ENCODE measurements at regions of chr16 and their contacts with region 1.

Region 1: DNA sequence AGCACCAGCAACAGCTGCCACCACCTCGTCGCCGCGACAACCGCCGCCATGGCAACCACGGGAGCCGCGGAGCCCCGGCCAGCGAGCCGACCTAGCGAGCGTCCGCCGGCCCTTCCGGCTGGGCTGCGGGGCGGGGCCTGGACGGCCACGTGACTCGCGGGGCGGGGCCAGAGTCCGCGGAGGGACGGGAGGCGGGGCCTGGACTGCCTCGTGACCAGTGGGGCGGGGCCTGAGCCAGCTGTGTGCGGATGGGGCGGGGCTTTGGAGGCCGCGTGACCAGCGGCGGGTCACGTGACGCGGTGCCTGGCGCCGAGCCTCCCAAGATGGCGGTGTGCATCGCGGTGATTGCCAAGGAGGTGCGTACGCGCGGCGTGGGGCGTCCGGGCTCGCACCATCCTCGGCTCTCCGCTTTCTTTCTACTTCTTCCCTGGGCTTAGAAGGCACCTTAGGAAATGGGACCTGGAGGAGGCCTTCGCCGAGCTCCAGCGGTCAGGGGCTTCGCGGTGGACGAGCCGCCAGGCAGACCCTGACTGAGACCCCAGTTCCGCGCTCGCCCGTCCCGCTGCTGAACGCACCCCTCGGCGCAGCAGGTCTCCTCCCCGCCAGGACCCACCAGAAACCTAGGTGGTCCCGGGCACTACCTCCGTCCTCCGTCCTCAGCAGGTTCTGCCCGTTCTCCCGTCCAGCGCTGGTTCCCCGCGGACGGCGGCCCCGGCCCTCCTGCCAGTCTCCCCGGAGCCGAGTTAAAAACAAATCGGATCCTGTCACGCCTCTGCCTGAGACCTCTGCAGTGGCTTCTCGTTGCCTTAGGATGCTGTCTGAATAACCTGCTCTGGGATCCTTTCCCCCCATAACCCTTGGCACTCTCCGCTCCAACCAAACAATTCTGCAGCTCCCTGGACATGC is at the starts of genes GALNS and TRAPPC2L:
- DNase-seq: peak; percentile 96 to 98 (median 97)
- H3K4me3 ChIP-seq: peak within 1 kb of the TSS; percentile 67 to 93
- H3K4me3 Mint-ChIP-seq: peak within 1 kb of the TSS; percentile 94 to 100 (median 97)
- H3K27ac ChIP-seq: peak within 1 kb of the TSS; percentile 76
- H3K27ac Mint-ChIP-seq: peak within 1 kb of the TSS; percentile 95 to 99 (median 97)
- H3K4me1 ChIP-seq: peaks cover 27% of the 10 kb centered on the region
- H3K4me1 Mint-ChIP-seq: peaks cover 18 to 43% (median 28%) of the 10 kb centered on the region in 4 donors
- H3K27me3 ChIP-seq: no peaks in the 10 kb centered on the region
- H3K27me3 Mint-ChIP-seq: peaks cover 0 to 2% of the 10 kb centered on the region in 2 donors
- total RNA-seq, gene GALNS: 58.8 to 65.7 TPM
- total RNA-seq, gene TRAPPC2L: 66.6 to 67.1 TPM

Region 2: DNA sequence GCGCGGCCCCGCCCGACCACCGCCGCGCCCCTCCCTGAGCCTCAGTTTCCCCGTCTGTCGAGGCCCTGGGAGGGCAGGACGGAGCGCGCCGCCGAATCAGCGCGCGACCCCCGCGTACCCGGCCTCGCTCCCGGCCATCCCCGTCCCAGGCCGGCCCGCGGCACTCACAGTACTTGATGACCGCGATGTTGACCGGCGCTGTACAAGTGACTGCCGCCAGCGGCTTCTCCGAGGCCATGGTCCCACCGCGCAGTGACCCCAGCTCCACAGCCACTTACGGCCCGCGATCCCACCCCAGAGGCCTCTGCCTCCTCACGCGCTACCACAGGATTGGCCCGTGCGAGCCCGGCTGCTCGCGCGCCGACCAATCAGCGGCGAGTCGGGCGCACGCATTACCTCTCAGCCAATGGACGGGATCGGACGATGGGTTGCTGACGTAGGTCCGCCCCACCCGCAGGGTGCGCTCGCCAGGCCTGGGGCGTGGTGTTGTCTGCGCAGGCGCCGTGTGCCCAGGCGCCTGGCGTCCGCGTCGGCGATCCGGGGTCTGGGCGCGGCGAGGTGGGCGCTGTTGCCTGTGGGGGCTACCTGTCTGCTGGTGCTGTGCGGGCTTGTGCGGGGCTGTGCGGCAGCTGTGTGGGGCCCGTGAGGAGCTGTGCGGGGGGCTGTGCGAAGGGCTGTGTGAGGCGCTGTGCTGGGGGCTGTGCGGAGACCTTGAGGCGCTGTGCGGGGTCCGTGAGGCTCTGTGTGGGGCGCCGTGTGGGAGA is 194.1 kb before region 1 on chr16 and contains the start of gene MVD:
- CTCF ChIA-PET with region 1: no interaction called
- POLR2A ChIA-PET with region 1: no interaction called
- intact Hi-C with region 1: loop called (anchors 1 kb)
- DNase-seq: peak; percentile 93 to 96 (median 95)
- H3K4me3 ChIP-seq: peak within 1 kb of the TSS; percentile 65 to 95
- H3K4me3 Mint-ChIP-seq: peak within 1 kb of the TSS; percentile 91 to 95 (median 94)
- H3K27ac ChIP-seq: peak within 1 kb of the TSS; percentile 83
- H3K27ac Mint-ChIP-seq: peak within 1 kb of the TSS; percentile 80 to 98 (median 97)
- H3K4me1 ChIP-seq: peaks cover 16% of the 10 kb centered on the region
- H3K4me1 Mint-ChIP-seq: peaks cover 11 to 22% (median 15%) of the 10 kb centered on the region in 4 donors
- H3K27me3 ChIP-seq: no peaks in the 10 kb centered on the region
- H3K27me3 Mint-ChIP-seq: no peaks in the 10 kb centered on the region
- total RNA-seq, gene MVD: 49.2 to 57.0 TPM

Region 3: DNA sequence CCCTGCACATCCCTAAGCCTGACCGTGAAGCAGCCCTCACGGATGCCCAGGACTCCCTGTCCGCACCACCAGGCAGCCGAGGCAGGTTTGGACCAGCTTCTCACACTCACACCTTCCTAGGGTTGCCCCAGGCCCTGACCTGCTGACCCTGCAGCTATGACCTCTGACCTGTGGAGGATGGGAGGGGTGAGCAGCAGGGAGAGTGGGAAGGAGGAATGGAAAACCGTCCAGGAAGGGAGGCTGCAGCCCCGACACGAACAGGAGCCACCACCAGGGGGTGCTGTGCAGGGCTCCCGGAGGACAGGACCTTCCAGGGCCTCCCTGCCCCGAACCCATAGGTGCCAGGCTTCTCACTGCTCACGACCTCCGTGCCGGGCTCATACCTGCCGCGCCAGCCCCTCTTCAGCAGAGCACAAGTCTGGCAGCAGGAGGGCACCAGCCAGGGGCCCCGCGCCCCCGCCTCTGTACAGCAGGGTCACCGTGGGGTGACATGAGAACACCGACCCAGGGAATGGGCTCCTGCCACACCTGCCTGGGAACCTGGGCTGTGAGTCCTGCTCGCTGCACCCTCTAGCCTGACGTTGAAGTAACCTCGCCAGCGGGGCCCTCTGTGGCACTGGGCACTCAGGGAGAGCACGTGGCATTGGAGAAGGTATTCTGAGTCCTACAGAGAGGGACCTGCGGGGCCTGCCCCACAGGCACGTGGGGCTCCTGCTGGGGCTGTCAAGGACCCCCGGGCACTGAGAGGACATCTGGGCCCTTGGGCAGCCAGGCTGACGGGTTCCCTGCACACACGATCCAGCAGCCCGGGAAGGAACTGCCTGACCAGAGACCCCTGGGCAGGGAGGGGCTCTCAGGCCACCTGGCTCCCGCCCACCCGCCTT is 113.1 kb before region 1 on chr16:
- CTCF ChIA-PET with region 1: interaction called, 13 read pairs
- POLR2A ChIA-PET with region 1: interaction called, 5 read pairs
- intact Hi-C with region 1: loop called (anchors 1 kb)
- DNase-seq: peak; percentile 65 to 76 (median 69)
- H3K4me3 ChIP-seq: no peak overlapping the region
- H3K4me3 Mint-ChIP-seq: peak overlapping the region in 4 of 8 donors; percentile 16 to 49 (median 30)
- H3K27ac ChIP-seq: no peak overlapping the region
- H3K27ac Mint-ChIP-seq: peak overlapping the region in 4 of 7 donors; percentile 7 to 52 (median 36)
- H3K4me1 ChIP-seq: peaks cover 41% of the 10 kb centered on the region
- H3K4me1 Mint-ChIP-seq: peaks cover 9 to 41% (median 22%) of the 10 kb centered on the region in 4 donors
- H3K27me3 ChIP-seq: no peaks in the 10 kb centered on the region
- H3K27me3 Mint-ChIP-seq: no peaks in the 10 kb centered on the region

Region 4: DNA sequence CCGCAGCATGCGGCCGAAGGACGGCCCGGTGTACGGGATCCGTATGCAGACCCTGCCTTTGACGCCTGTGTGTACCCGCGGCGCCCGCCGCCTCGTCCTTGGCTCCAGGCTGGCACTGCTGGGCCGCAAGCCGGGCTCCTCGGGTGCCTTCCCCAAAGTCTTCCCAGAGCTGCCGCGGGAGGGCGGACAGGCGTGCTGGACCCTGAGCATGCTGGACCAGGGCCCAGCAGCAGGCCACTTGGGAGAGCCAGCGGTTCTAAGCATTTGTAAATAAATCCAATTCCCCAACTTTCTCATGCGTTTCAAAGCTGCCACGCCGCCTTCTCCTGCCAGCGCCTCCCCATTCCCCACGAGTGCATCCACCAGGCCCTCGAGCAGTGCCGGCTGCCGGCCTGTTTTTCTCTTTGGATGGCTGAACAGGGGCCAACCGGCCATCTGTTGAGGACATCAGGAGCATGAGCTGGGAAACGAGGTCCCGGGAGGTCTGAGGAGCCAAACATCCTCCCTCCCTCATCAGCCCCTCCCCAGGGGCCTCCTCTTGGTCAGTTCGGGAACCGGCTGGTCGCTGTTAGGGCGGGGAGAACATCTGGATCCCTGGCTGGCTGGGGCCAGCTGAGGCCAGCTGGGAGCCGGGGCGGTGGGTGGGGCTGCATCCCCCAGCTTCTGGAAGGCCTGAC is 29.9 kb after region 1 on chr16:
- CTCF ChIA-PET with region 1: no interaction called
- POLR2A ChIA-PET with region 1: no interaction called
- intact Hi-C with region 1: no loop called
- DNase-seq: no peak
- H3K4me3 ChIP-seq: no peak overlapping the region
- H3K4me3 Mint-ChIP-seq: no peak overlapping the region
- H3K27ac ChIP-seq: no peak overlapping the region
- H3K27ac Mint-ChIP-seq: no peak overlapping the region
- H3K4me1 ChIP-seq: no peaks in the 10 kb centered on the region
- H3K4me1 Mint-ChIP-seq: peaks cover 2 to 6% (median 4%) of the 10 kb centered on the region in 4 donors
- H3K27me3 ChIP-seq: no peaks in the 10 kb centered on the region
- H3K27me3 Mint-ChIP-seq: no peaks in the 10 kb centered on the region

Region 5: GRCh38 chr16:89115216-89115861 is 258.3 kb after region 1 on chr16:
- CTCF ChIA-PET with region 1: no interaction called
- POLR2A ChIA-PET with region 1: interaction called, 12 read pairs
- intact Hi-C with region 1: no loop called
- DNase-seq: peak; percentile 94 to 98 (median 95)
- H3K4me3 ChIP-seq: peak overlapping the region; percentile 24 to 45
- H3K4me3 Mint-ChIP-seq: peak overlapping the region; percentile 79 to 92 (median 86)
- H3K27ac ChIP-seq: peak overlapping the region; percentile 86
- H3K27ac Mint-ChIP-seq: peak overlapping the region; percentile 85 to 99 (median 97)
- H3K4me1 ChIP-seq: peaks cover 46% of the 10 kb centered on the region
- H3K4me1 Mint-ChIP-seq: peaks cover 21 to 50% (median 37%) of the 10 kb centered on the region in 4 donors
- H3K27me3 ChIP-seq: no peaks in the 10 kb centered on the region
- H3K27me3 Mint-ChIP-seq: no peaks in the 10 kb centered on the region

Region 6: GRCh38 chr16:89217388-89218191 is 360.5 kb after region 1 on chr16 and contains the start of gene ZNF778:
- CTCF ChIA-PET with region 1: interaction called, 13 read pairs
- POLR2A ChIA-PET with region 1: interaction called, 29 read pairs
- intact Hi-C with region 1: loop called (anchors 1 kb)
- DNase-seq: peak; percentile 83 to 87 (median 85)
- H3K4me3 ChIP-seq: peak within 1 kb of the TSS; percentile 76 to 91
- H3K4me3 Mint-ChIP-seq: peak within 1 kb of the TSS; percentile 73 to 94 (median 92)
- H3K27ac ChIP-seq: peak within 1 kb of the TSS; percentile 94
- H3K27ac Mint-ChIP-seq: peak within 1 kb of the TSS; percentile 64 to 98 (median 92)
- H3K4me1 ChIP-seq: peaks cover 21% of the 10 kb centered on the region
- H3K4me1 Mint-ChIP-seq: peaks cover 10 to 37% (median 26%) of the 10 kb centered on the region in 4 donors
- H3K27me3 ChIP-seq: no peaks in the 10 kb centered on the region
- H3K27me3 Mint-ChIP-seq: no peaks in the 10 kb centered on the region
- total RNA-seq, gene ZNF778: 13.1 to 15.9 TPM